Naive thymus-derived CD4-positive, alpha-beta T cell (primary cell): ENCODE measurements at regions of chr1 and their contacts with region 1.

Region 1: DNA sequence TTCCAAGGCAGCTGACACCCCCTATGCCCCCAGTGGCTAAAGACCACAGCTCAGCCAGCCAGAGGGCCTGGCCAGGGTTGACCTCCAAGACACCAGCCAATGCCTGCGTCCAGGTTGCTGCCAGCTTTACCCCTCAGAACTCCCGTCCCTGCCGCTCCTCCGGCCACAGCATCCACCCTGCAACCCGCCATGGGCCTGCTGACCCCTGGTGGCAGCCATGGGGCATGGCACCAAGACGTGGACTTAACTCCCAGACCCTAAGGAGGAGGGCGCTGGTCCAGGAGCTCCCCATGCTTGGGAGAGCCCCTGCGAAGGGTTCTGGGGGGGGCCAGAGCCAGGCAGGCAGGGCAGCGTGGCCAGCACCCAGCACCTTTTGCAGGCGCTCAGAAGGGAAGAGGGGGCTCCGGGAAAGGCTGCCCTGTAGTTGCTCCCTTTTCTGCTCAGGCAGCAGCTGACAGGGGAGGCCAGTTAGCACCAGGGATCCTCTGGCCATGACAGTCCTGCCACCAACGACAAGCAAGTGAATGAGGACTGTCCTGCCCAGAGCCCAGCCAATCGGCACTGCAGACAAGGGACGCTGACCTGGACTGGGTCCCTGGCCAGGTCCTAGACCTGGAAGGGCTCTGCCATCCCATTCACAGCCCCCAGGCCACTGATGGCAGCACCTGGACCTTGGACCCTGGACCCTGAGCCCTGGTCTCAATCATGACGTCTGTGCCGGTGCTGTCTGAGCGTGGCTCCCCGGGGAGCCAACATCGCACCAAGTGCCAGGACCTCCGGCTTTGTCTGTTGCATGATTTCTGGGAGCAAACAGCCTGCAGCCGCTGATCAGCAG is 246.2 kb downstream of the NPHP4 start:
- DNase-seq: peak in 8 of 9 donors; percentile 28 to 56 (median 36)
- ATAC-seq: peak; percentile 68
- H3K4me3 ChIP-seq: no peak overlapping the region
- H3K4me3 Mint-ChIP-seq: no peak overlapping the region
- H3K27ac ChIP-seq: no peak overlapping the region
- H3K27ac Mint-ChIP-seq: no peak overlapping the region
- H3K4me1 ChIP-seq: no peaks in the 10 kb centered on the region
- H3K4me1 Mint-ChIP-seq: peaks cover 0 to 5% (median 0%) of the 10 kb centered on the region in 7 donors
- H3K27me3 ChIP-seq: no peaks in the 10 kb centered on the region
- H3K27me3 Mint-ChIP-seq: peaks cover 0 to 38% (median 13%) of the 10 kb centered on the region in 5 donors

Region 2: GRCh38 chr1:4298361-4299083 is 1447.5 kb before region 1 on chr1:
- CTCF ChIA-PET with region 1: no interaction called
- POLR2A ChIA-PET with region 1: no interaction called
- intact Hi-C with region 1: no loop called
- DNase-seq: no peak
- ATAC-seq: no peak
- H3K4me3 ChIP-seq: no peak overlapping the region
- H3K4me3 Mint-ChIP-seq: no peak overlapping the region
- H3K27ac ChIP-seq: no peak overlapping the region
- H3K27ac Mint-ChIP-seq: no peak overlapping the region
- H3K4me1 ChIP-seq: no peaks in the 10 kb centered on the region
- H3K4me1 Mint-ChIP-seq: peaks cover 0 to 2% (median 0%) of the 10 kb centered on the region in 7 donors
- H3K27me3 ChIP-seq: no peaks in the 10 kb centered on the region
- H3K27me3 Mint-ChIP-seq: peaks cover 0 to 21% (median 9%) of the 10 kb centered on the region in 5 donors

Region 3: GRCh38 chr1:5640845-5641244 is 105.1 kb before region 1 on chr1:
- CTCF ChIA-PET with region 1: no interaction called
- POLR2A ChIA-PET with region 1: no interaction called
- intact Hi-C with region 1: loop called in 1 of 2 experiments (anchors 2 kb)
- DNase-seq: no peak
- ATAC-seq: no peak
- H3K4me3 ChIP-seq: no peak overlapping the region
- H3K4me3 Mint-ChIP-seq: no peak overlapping the region
- H3K27ac ChIP-seq: no peak overlapping the region
- H3K27ac Mint-ChIP-seq: no peak overlapping the region
- H3K4me1 ChIP-seq: no peaks in the 10 kb centered on the region
- H3K4me1 Mint-ChIP-seq: peaks cover 0 to 8% (median 0%) of the 10 kb centered on the region in 7 donors
- H3K27me3 ChIP-seq: no peaks in the 10 kb centered on the region
- H3K27me3 Mint-ChIP-seq: peaks cover 3 to 65% (median 49%) of the 10 kb centered on the region in 5 donors

Region 4: GRCh38 chr1:5858844-5859407 is 112.9 kb after region 1 on chr1:
- CTCF ChIA-PET with region 1: no interaction called
- POLR2A ChIA-PET with region 1: no interaction called
- intact Hi-C with region 1: no loop called
- DNase-seq: no peak
- ATAC-seq: no peak
- H3K4me3 ChIP-seq: no peak overlapping the region
- H3K4me3 Mint-ChIP-seq: no peak overlapping the region
- H3K27ac ChIP-seq: no peak overlapping the region
- H3K27ac Mint-ChIP-seq: no peak overlapping the region
- H3K4me1 ChIP-seq: no peaks in the 10 kb centered on the region
- H3K4me1 Mint-ChIP-seq: no peaks in the 10 kb centered on the region
- H3K27me3 ChIP-seq: no peaks in the 10 kb centered on the region
- H3K27me3 Mint-ChIP-seq: no peaks in the 10 kb centered on the region